Endothelial cell of umbilical vein (primary cell): ENCODE measurements at regions of chr4 and their contacts with region 1.

Region 1: DNA sequence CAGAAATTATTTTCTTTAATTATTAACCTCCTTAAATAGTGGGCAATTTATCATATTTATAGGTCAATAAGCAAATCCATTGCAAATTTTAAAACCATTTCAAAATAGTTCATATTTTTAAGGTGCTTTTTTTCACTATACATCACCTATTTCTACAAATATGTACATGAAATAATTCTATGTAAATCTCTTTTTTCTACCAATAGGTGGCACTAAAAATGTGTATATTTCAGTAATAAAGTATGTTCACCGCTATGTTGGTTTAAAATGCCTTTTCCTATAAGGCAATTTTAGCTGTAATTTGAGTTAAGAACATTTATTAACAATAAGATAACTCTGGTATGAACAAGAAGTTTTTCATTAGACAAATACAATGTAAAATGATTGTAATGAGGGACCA is 672.2 kb downstream of the KCTD8 start:
- DNase-seq: peak; percentile 24
- H3K4me3 ChIP-seq: no peak overlapping the region
- H3K27ac ChIP-seq: no peak overlapping the region
- H3K4me1 ChIP-seq: no peaks in the 10 kb centered on the region
- H3K27me3 ChIP-seq: no peaks in the 10 kb centered on the region
- CTCF ChIP-seq: no peak
- POLR2A ChIP-seq: no peak

Region 2: GRCh38 chr4:43718369-43718768 is 58.0 kb before region 1 on chr4:
- CTCF ChIA-PET with region 1: no interaction called
- POLR2A ChIA-PET with region 1: no interaction called
- dilution Hi-C with region 1: no loop called
- intact Hi-C with region 1: no loop called
- DNase-seq: no peak
- H3K4me3 ChIP-seq: no peak overlapping the region
- H3K27ac ChIP-seq: no peak overlapping the region
- H3K4me1 ChIP-seq: no peaks in the 10 kb centered on the region
- H3K27me3 ChIP-seq: no peaks in the 10 kb centered on the region
- CTCF ChIP-seq: no peak
- POLR2A ChIP-seq: no peak

Region 3: DNA sequence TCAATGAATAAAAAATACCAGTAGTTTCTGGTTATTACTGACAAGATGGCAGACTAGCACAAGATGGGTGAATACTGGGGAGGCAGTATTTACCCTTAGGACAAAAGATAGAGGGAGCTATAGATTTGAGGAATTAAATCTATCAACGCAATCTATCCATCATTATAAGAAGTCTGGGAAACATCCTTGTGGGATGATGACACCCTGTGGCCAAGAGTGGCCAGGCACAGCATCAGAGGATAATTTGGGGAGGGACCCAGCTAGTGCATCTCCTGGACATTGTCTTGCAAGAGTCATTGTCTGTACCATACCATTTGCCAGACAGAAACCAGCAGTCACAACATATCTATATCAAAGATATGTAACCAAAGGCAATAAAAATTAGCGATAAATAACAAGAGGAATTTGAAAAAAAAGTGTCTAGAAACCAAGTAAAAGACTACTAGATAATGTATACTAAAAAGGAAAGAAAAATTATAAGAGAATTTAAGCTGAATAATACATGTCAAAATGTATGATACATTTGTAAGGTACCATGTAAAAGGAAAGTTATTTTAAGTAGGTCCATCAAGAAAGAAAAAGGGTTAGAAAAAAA is 649.3 kb after region 1 on chr4:
- CTCF ChIA-PET with region 1: interaction called, 55 read pairs
- POLR2A ChIA-PET with region 1: no interaction called
- dilution Hi-C with region 1: no loop called
- intact Hi-C with region 1: loop called (anchors 1 kb)
- DNase-seq: peak; percentile 35
- H3K4me3 ChIP-seq: no peak overlapping the region
- H3K27ac ChIP-seq: no peak overlapping the region
- H3K4me1 ChIP-seq: no peaks in the 10 kb centered on the region
- H3K27me3 ChIP-seq: no peaks in the 10 kb centered on the region
- CTCF ChIP-seq: peak; percentile 47 to 54
- POLR2A ChIP-seq: no peak

Region 4: DNA sequence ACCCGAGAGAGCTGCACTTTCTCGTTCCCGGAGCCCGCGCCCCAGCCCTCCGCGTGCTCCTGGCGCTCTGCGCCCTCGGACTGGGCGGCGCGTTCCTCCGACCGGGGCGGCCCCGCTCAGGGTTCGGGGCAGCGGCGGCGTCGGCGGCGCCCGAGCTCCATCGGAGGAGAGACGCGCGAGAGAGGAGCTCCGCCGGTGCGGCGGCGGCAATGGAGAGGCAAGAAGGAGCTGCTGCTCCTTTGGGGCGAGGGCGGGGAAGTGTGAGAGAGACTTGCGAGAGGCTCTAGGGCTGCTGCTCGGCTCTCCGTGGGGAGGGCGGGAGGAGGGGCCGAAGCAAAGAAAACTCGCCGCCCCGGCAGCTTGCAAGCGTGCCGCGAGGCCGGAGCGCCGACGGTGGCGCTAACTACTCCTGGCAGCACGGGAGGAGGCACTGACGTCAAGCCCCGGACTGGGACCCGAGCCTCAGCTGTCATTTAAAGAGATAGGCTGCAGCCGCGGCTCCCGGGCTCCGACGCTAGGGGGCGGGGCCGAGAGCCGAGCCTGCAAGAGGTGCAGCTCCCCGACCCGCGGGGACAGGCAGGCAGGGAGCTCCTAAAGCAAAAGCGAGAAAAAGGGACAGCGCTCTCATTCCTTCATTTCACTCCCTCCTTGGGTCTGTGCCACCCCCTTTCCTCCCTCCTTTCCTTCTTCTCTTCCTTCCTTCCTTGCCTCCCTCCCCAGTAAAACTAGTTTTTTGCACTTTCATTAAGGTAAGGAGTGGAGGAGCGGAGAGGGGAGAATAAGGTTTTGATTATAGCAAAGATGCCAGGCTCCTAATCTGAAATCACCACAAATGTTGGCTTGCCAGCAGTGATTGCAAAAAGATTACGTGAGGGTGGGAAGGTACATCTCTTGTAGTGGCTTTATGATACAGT is 672.4 kb after region 1 on chr4 and contains the start of gene KCTD8:
- CTCF ChIA-PET with region 1: interaction called, 3 read pairs
- POLR2A ChIA-PET with region 1: no interaction called
- dilution Hi-C with region 1: no loop called
- intact Hi-C with region 1: loop called (anchors 2 kb)
- DNase-seq: peak; percentile 78
- H3K4me3 ChIP-seq: peak within 1 kb of the TSS in 2 of 3 experiments; percentile 30 to 36
- H3K27ac ChIP-seq: no peak within 1 kb of the TSS
- H3K4me1 ChIP-seq: peaks cover 10% of the 10 kb centered on the region
- H3K27me3 ChIP-seq: peaks cover 25 to 66% of the 10 kb centered on the region in 2 experiments
- CTCF ChIP-seq: peak; percentile 73 to 83
- POLR2A ChIP-seq: no peak
- total RNA-seq, gene KCTD8: 0.80 and 0.88 TPM in 2 replicates

Region 5: DNA sequence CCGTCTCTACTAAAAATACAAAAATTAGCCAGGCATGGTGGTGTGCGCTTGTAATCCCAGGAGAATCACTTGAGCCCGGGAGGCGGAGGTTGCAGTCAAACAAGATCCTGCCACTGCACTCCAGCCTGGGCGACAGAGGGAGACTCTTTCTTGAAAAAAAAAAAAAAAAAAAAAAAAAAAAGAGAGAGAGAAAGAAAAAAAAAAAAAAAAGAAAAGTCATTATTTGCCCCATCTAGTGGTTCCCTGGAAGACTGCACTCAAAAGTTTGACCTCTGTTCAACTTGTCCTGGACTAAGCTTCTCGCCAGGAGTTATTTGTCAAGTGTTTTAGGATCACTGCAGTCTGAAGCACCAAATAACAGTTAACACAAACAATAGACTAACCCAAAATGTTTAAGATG is 717.6 kb after region 1 on chr4:
- CTCF ChIA-PET with region 1: interaction called, 12 read pairs
- POLR2A ChIA-PET with region 1: no interaction called
- dilution Hi-C with region 1: no loop called
- intact Hi-C with region 1: no loop called
- DNase-seq: peak; percentile 9
- H3K4me3 ChIP-seq: no peak overlapping the region
- H3K27ac ChIP-seq: no peak overlapping the region
- H3K4me1 ChIP-seq: no peaks in the 10 kb centered on the region
- H3K27me3 ChIP-seq: no peaks in the 10 kb centered on the region
- CTCF ChIP-seq: peak in 1 of 2 donors; percentile 23
- POLR2A ChIP-seq: no peak

Region 6: DNA sequence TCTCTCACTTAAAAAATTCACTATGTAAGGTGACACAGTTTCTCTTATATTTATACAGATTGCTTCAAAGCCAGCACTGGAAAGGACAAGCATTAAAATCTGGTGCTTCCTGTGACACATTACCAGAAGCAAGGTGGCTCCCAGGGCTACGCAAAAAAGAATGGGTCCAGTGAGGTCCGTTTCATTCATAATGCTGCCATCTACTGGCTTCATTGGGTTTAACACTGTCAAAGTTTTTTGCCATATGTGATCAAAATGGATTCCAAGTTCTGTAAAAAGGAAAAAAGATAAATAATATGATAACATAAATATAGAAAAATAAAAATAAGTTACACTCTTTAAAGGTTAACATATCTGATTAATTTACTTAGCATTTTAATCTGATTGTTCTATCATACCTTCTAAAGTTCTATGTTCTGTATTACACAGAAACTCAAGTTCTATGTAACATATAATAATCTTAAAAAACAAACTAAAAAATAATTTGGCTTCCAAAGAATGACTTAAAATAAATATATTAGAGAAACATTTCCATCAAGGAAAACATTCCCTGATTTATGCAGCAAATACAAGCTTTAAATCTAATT is 853.0 kb after region 1 on chr4:
- CTCF ChIA-PET with region 1: interaction called, 7 read pairs
- POLR2A ChIA-PET with region 1: no interaction called
- dilution Hi-C with region 1: no loop called
- intact Hi-C with region 1: loop called (anchors 1 kb)
- DNase-seq: peak; percentile 55
- H3K4me3 ChIP-seq: no peak overlapping the region
- H3K27ac ChIP-seq: no peak overlapping the region
- H3K4me1 ChIP-seq: no peaks in the 10 kb centered on the region
- H3K27me3 ChIP-seq: no peaks in the 10 kb centered on the region
- CTCF ChIP-seq: peak; percentile 49 to 59
- POLR2A ChIP-seq: no peak